ENCODE measurements at regions of chr4 and their contacts with region 1.

Region 1: GRCh38 chr4:20422398-20422797 is 170.7 kb downstream of the SLIT2 start:
- DNase-seq: peak in 1 of 2 donors; percentile 8
- ATAC-seq: peak in 4 of 8 donors; percentile 33 to 83 (median 62)
- H3K4me3 ChIP-seq: no peak overlapping the region
- H3K27ac ChIP-seq: no peak overlapping the region
- H3K4me1 ChIP-seq: peaks cover 0 to 11% (median 0%) of the 10 kb centered on the region in 9 donors
- H3K27me3 ChIP-seq: no peaks in the 10 kb centered on the region
- CTCF ChIP-seq: peak in 8 of 9 donors; percentile 12 to 60 (median 43)

Region 2: DNA sequence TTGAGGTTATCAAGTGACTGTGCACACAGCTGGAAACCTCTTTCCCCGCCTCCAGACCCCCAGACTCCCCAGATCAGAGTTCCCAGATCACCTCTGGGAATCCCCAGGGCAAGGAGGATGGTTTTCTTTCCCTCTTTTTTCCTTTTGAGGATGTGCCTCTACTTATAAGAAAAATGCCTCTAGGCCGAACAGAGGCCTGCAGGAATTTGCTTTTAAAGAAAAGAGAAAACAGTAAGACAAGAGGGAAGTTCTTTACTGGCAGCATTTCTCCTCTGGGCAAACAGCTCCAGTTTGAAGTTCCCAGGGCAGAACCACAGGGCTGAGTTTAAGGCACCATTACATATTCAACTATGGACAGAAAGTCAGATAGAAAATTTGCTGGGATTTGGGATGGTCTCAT is 1562.9 kb before region 1 on chr4:
- intact Hi-C with region 1: no loop called
- DNase-seq: no peak
- ATAC-seq: no peak
- H3K4me3 ChIP-seq: no peak overlapping the region
- H3K27ac ChIP-seq: no peak overlapping the region
- H3K4me1 ChIP-seq: peaks cover 0 to 2% (median 0%) of the 10 kb centered on the region in 9 donors
- H3K27me3 ChIP-seq: no peaks in the 10 kb centered on the region
- CTCF ChIP-seq: no peak

Region 3: DNA sequence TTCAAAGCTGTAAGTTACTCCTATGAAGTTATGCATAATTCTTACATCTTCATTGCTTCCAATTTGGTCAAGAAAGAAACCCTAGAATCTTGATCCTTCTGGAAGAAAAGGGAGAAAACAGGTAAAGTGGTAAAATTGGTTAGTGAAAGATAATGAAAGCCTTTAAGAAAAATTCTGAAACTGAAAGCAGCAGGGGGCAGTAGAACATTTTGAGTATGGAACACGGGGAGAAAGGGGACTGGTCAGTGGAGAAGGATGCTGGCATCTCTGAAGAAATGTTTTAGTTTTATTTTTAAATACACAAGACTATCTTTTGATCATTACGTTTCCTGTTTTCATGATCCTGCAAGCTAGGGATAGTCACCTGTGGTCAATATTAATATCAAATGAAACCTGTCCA is 116.4 kb before region 1 on chr4:
- intact Hi-C with region 1: loop called in 1 of 10 experiments (anchors 10 kb)
- DNase-seq: no peak
- ATAC-seq: no peak
- H3K4me3 ChIP-seq: no peak overlapping the region
- H3K27ac ChIP-seq: no peak overlapping the region
- H3K4me1 ChIP-seq: no peaks in the 10 kb centered on the region
- H3K27me3 ChIP-seq: no peaks in the 10 kb centered on the region
- CTCF ChIP-seq: peak in 1 of 9 donors; percentile 9

Region 4: DNA sequence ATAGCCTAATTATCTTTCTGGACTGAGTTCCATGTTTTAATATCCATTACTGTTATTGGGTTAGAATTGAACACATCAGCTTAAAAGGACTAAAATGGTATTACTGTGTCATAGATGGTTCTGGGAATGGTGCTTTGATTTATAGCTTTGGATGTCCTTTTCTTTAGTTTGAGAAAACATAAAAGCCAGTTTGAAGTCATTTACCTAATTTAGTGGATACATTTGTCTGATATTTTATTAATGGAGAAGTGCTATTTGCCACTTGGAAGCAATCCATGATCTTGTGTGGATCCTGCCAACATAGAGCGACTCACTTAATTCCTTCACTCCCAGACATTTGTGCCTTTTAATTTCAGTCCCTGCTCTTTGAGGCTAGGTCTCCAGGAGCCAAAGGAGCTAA is 65.5 kb after region 1 on chr4:
- intact Hi-C with region 1: loop called in 1 of 10 experiments (anchors 2 kb)
- DNase-seq: no peak
- ATAC-seq: no peak
- H3K4me3 ChIP-seq: no peak overlapping the region
- H3K27ac ChIP-seq: no peak overlapping the region
- H3K4me1 ChIP-seq: no peaks in the 10 kb centered on the region
- H3K27me3 ChIP-seq: no peaks in the 10 kb centered on the region
- CTCF ChIP-seq: no peak

Region 5: GRCh38 chr4:20544645-20545044 is 122.2 kb after region 1 on chr4:
- intact Hi-C with region 1: loop called in 7 of 10 experiments (anchors 2 to 10 kb)
- DNase-seq: no peak
- ATAC-seq: peak in 1 of 8 donors; percentile 62
- H3K4me3 ChIP-seq: no peak overlapping the region
- H3K27ac ChIP-seq: no peak overlapping the region
- H3K4me1 ChIP-seq: no peaks in the 10 kb centered on the region
- H3K27me3 ChIP-seq: no peaks in the 10 kb centered on the region
- CTCF ChIP-seq: peak in 7 of 9 donors; percentile 39 to 63 (median 50)

Region 6: GRCh38 chr4:22048323-22048722 is 1625.9 kb after region 1 on chr4:
- intact Hi-C with region 1: no loop called
- DNase-seq: no peak
- ATAC-seq: no peak
- H3K4me3 ChIP-seq: no peak overlapping the region
- H3K27ac ChIP-seq: no peak overlapping the region
- H3K4me1 ChIP-seq: no peaks in the 10 kb centered on the region
- H3K27me3 ChIP-seq: no peaks in the 10 kb centered on the region
- CTCF ChIP-seq: no peak

Measured in heart right ventricle (tissue), 16 donors.